ENCODE measurements at regions of chr6 and their contacts with region 1.

Region 1: DNA sequence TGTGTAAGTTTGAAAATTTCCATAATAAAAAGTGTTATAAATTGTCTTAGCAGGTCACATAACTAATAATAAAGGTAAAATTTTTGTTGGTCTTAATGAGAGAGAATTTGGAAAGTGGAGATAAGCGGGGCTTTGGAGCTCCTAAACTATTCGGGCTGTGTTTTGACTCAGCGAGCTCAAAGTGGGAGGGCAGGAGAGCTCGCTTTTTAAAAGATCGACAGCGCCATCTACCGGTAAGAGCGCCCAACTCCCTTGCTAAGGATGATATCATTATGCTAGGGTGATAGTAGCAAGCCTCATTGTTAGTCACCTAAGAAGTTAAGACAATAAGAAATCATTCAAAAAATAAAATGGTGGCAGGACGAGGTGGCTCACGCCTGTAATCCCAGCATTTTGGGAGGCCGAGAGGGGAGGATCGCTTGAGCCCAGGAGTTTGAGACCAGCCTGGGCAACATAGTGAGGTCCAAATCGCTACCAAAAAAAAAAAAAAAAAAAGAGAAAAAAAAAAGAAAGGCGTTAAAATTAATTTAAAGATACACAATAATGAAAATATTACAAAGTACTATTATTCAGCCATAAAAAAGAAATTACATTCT is 24.8 kb downstream of the C6orf15 start:
- DNase-seq: peak; percentile 70 to 82
- H3K4me3 ChIP-seq: no peak overlapping the region
- H3K4me3 Mint-ChIP-seq: no peak overlapping the region
- H3K27ac Mint-ChIP-seq: no peak overlapping the region
- H3K4me1 ChIP-seq: peaks cover 14% of the 10 kb centered on the region
- H3K4me1 Mint-ChIP-seq: peaks cover 6% of the 10 kb centered on the region
- H3K27me3 ChIP-seq: no peaks in the 10 kb centered on the region
- H3K27me3 Mint-ChIP-seq: no peaks in the 10 kb centered on the region
- CTCF ChIP-seq: peak; percentile 51 to 58

Region 2: DNA sequence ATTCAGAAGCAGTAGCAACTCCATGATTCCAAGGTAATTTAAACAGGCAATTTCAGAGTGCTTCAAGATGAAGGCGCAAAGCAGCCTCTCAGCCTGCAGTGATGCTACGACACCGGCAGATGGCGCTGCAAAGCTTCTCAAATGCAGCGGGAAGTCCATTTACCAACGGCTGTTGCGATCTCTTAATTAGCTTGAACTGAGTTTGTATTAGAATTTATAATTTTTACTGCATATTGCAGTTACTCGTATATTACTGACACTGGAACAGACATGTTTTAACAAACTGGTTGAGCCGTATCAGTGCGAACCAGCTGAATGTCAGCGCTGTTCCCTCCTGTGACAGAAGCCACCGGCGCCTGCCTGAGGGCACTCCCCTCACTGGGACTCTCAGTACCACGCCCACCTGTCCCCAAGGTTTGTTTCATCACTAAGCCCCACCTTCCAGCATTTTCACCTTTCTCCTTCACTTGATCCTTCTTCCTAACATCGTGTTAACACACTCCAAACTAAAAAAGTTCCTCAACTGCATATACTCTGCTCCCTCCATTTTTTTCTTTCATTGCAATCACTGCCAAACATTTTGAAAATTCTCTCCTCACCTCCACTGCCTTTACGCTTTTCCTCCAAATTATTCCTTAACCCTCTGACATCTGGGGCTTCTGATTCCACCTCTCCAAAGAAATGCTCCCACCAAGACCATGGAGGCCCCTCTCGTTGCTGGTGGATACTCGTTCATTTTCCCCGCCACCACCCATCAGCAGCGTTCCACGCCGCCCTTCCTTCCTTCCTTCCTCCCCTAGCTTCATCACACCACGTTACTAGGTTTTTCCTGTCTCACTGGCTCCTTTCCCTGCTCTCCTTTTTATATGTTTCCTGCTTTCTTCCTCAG is 545.8 kb before region 1 on chr6:
- CTCF ChIA-PET with region 1: interaction called, 12 read pairs
- POLR2A ChIA-PET with region 1: no interaction called
- intact Hi-C with region 1: no loop called
- DNase-seq: peak; percentile 75
- H3K4me3 ChIP-seq: peak overlapping the region; percentile 32
- H3K4me3 Mint-ChIP-seq: peak overlapping the region; percentile 69
- H3K27ac Mint-ChIP-seq: peak overlapping the region; percentile 4
- H3K4me1 ChIP-seq: no peaks in the 10 kb centered on the region
- H3K4me1 Mint-ChIP-seq: peaks cover 16% of the 10 kb centered on the region
- H3K27me3 ChIP-seq: no peaks in the 10 kb centered on the region
- H3K27me3 Mint-ChIP-seq: no peaks in the 10 kb centered on the region
- CTCF ChIP-seq: peak; percentile 90 to 97

Region 3: DNA sequence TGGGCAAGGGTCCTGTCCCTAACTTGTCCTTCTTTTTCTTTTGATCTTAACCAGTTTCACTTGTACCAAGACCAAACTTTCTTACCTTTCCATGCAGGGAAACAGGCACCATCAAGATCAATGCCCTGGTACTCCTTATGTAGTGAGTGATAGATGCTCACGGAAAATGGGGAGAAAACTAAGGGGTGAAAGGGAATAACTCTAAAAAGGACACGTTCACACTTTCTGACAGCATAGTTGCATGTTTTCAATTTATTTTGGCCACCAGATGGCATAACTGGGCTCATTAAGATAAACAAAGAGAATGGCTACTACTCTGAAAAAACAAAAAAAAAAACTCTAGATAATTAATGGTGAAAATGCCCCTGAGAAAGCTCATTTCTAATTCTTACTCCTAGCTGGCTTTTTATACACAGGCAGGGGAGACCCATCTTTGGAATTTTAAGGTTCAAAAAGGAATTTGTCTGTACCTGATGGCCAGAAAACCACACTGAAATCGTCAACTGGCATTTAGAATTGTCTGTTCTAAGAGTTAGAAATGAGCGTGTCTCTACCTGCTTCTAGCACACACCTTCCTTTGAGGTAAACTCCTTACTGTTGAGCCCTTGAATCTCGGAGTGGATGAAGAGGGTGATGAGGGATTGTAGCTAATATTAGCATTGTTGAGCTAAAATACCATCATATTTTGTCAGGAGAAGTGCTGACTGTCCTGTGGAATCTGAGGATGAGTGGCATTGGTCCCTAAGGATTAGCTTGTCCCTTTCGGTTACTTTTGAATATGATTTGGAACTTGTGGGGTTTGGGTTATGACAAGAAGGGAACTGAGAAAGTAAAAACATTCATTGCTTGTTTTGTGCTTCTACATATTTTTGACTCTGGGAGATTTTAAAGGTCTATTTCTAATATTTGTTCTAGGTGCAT is 265.5 kb before region 1 on chr6:
- CTCF ChIA-PET with region 1: interaction called, 19 read pairs
- POLR2A ChIA-PET with region 1: no interaction called
- intact Hi-C with region 1: no loop called
- DNase-seq: peak in 1 of 2 experiments; percentile 44
- H3K4me3 ChIP-seq: no peak overlapping the region
- H3K4me3 Mint-ChIP-seq: peak overlapping the region; percentile 65
- H3K27ac Mint-ChIP-seq: peak overlapping the region; percentile 94
- H3K4me1 ChIP-seq: peaks cover 50% of the 10 kb centered on the region
- H3K4me1 Mint-ChIP-seq: peaks cover 42% of the 10 kb centered on the region
- H3K27me3 ChIP-seq: no peaks in the 10 kb centered on the region
- H3K27me3 Mint-ChIP-seq: no peaks in the 10 kb centered on the region
- CTCF ChIP-seq: peak; percentile 28 to 53

Region 4: GRCh38 chr6:30883685-30884520 is 203.7 kb before region 1 on chr6 and contains the start of gene DDR1:
- CTCF ChIA-PET with region 1: interaction called, 16 read pairs
- POLR2A ChIA-PET with region 1: no interaction called
- intact Hi-C with region 1: no loop called
- DNase-seq: peak; percentile 81 to 82
- H3K4me3 ChIP-seq: peak within 1 kb of the TSS; percentile 46
- H3K4me3 Mint-ChIP-seq: peak within 1 kb of the TSS; percentile 83
- H3K27ac Mint-ChIP-seq: peak within 1 kb of the TSS; percentile 82
- H3K4me1 ChIP-seq: peaks cover 39% of the 10 kb centered on the region
- H3K4me1 Mint-ChIP-seq: peaks cover 43% of the 10 kb centered on the region
- H3K27me3 ChIP-seq: no peaks in the 10 kb centered on the region
- H3K27me3 Mint-ChIP-seq: no peaks in the 10 kb centered on the region
- CTCF ChIP-seq: no peak
- total RNA-seq, gene DDR1: 113 and 115 TPM in 2 replicates

Region 5: GRCh38 chr6:30914076-30914853 is 173.3 kb before region 1 on chr6 and contains the start of gene VARS2:
- CTCF ChIA-PET with region 1: interaction called, 66 read pairs
- POLR2A ChIA-PET with region 1: interaction called, 6 read pairs
- intact Hi-C with region 1: loop called (anchors 1 kb)
- DNase-seq: peak; percentile 94 to 98
- H3K4me3 ChIP-seq: peak within 1 kb of the TSS; percentile 54
- H3K4me3 Mint-ChIP-seq: peak within 1 kb of the TSS; percentile 87
- H3K27ac Mint-ChIP-seq: peak within 1 kb of the TSS; percentile 92
- H3K4me1 ChIP-seq: peaks cover 11% of the 10 kb centered on the region
- H3K4me1 Mint-ChIP-seq: peaks cover 14% of the 10 kb centered on the region
- H3K27me3 ChIP-seq: no peaks in the 10 kb centered on the region
- H3K27me3 Mint-ChIP-seq: no peaks in the 10 kb centered on the region
- CTCF ChIP-seq: peak; percentile 9 to 31
- total RNA-seq, gene VARS2: 32.1 and 37.5 TPM in 2 replicates

Region 6: DNA sequence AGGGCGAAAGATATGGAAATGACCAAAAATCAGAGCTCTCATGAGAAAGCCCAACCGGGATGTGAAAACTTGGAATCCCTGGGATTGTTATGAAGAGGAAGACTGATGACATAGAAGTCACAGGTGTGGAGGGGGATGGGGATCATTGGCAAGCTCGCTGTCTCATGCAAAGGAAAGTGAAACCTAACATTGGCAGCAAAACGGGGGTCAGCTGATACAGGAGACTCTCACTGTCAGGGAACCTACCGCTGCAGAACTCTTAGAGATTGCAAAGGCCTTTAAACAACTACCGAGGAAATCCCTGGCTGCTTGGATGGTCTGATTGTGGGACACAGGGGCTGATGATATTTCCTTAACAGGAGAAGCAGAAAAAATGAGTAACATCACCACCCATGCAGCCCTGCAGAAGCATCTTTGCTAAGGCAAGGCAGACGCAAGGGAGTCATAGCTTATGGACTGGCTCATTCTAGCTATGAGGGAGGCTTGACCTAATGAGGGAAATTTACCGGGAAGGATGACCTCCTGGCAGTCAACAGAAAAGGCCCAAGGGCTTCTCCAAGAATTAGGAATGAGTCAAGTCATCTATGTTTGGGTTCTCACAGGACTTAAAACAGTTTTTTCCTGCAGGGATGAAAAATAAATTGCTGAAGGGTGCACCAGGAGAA is 97.0 kb before region 1 on chr6:
- CTCF ChIA-PET with region 1: no interaction called
- POLR2A ChIA-PET with region 1: no interaction called
- intact Hi-C with region 1: no loop called
- DNase-seq: no peak
- H3K4me3 ChIP-seq: no peak overlapping the region
- H3K4me3 Mint-ChIP-seq: no peak overlapping the region
- H3K27ac Mint-ChIP-seq: no peak overlapping the region
- H3K4me1 ChIP-seq: peaks cover 17% of the 10 kb centered on the region
- H3K4me1 Mint-ChIP-seq: peaks cover 7% of the 10 kb centered on the region
- H3K27me3 ChIP-seq: no peaks in the 10 kb centered on the region
- H3K27me3 Mint-ChIP-seq: no peaks in the 10 kb centered on the region
- CTCF ChIP-seq: no peak

Region 7: GRCh38 chr6:31042806-31043205 is 44.8 kb before region 1 on chr6:
- CTCF ChIA-PET with region 1: interaction called, 13 read pairs
- POLR2A ChIA-PET with region 1: no interaction called
- intact Hi-C with region 1: no loop called
- DNase-seq: peak; percentile 57 to 66
- H3K4me3 ChIP-seq: no peak overlapping the region
- H3K4me3 Mint-ChIP-seq: no peak overlapping the region
- H3K27ac Mint-ChIP-seq: no peak overlapping the region
- H3K4me1 ChIP-seq: peaks cover 6% of the 10 kb centered on the region; the same call in 1 of the 2 replicates
- H3K4me1 Mint-ChIP-seq: no peaks in the 10 kb centered on the region
- H3K27me3 ChIP-seq: no peaks in the 10 kb centered on the region
- H3K27me3 Mint-ChIP-seq: no peaks in the 10 kb centered on the region
- CTCF ChIP-seq: peak; percentile 52 to 68

Region 8: GRCh38 chr6:31068669-31069340 is 18.8 kb before region 1 on chr6:
- CTCF ChIA-PET with region 1: interaction called, 43 read pairs
- POLR2A ChIA-PET with region 1: no interaction called
- intact Hi-C with region 1: no loop called
- DNase-seq: peak; percentile 61 to 78
- H3K4me3 ChIP-seq: no peak overlapping the region
- H3K4me3 Mint-ChIP-seq: no peak overlapping the region
- H3K27ac Mint-ChIP-seq: no peak overlapping the region
- H3K4me1 ChIP-seq: no peaks in the 10 kb centered on the region
- H3K4me1 Mint-ChIP-seq: no peaks in the 10 kb centered on the region
- H3K27me3 ChIP-seq: no peaks in the 10 kb centered on the region
- H3K27me3 Mint-ChIP-seq: no peaks in the 10 kb centered on the region
- CTCF ChIP-seq: peak; percentile 68 to 84

Measured in Caco-2 (cell line).